ENCODE measurements at regions of chr16 and their contacts with region 1.

Region 1: GRCh38 chr16:21300309-21301167 is 22.4 kb upstream of the CRYM start:
- DNase-seq: peak; percentile 92 to 99
- H3K4me3 ChIP-seq: peak overlapping the region; percentile 72 to 79
- H3K27ac ChIP-seq: peak overlapping the region; percentile 82 to 83
- H3K4me1 ChIP-seq: peaks cover 0 to 4% of the 10 kb centered on the region in 2 donors
- H3K27me3 ChIP-seq: no peaks in the 10 kb centered on the region
- CTCF ChIP-seq: peak; percentile 84 to 88 (median 87)

Region 2: GRCh38 chr16:20806168-20807050 is 494.1 kb before region 1 on chr16 and contains the starts of genes ERI2 and REXO5:
- intact Hi-C with region 1: loop called (anchors 2 kb)
- DNase-seq: peak; percentile 80 to 96
- H3K4me3 ChIP-seq: peak within 1 kb of the TSS; percentile 76 to 92
- H3K27ac ChIP-seq: peak within 1 kb of the TSS; percentile 87 to 92
- H3K4me1 ChIP-seq: peaks cover 0 to 5% of the 10 kb centered on the region in 2 donors
- H3K27me3 ChIP-seq: no peaks in the 10 kb centered on the region
- CTCF ChIP-seq: peak in 1 of 3 experiments; percentile 59
- total RNA-seq, gene ERI2: not detected
- total RNA-seq, gene REXO5: 2.1 TPM

Region 3: GRCh38 chr16:21184834-21185233 is 115.7 kb before region 1 on chr16:
- intact Hi-C with region 1: loop called (anchors 1 kb)
- DNase-seq: no peak
- H3K4me3 ChIP-seq: no peak overlapping the region
- H3K27ac ChIP-seq: no peak overlapping the region
- H3K4me1 ChIP-seq: peaks cover 0 to 9% of the 10 kb centered on the region in 2 donors
- H3K27me3 ChIP-seq: no peaks in the 10 kb centered on the region
- CTCF ChIP-seq: no peak

Region 4: DNA sequence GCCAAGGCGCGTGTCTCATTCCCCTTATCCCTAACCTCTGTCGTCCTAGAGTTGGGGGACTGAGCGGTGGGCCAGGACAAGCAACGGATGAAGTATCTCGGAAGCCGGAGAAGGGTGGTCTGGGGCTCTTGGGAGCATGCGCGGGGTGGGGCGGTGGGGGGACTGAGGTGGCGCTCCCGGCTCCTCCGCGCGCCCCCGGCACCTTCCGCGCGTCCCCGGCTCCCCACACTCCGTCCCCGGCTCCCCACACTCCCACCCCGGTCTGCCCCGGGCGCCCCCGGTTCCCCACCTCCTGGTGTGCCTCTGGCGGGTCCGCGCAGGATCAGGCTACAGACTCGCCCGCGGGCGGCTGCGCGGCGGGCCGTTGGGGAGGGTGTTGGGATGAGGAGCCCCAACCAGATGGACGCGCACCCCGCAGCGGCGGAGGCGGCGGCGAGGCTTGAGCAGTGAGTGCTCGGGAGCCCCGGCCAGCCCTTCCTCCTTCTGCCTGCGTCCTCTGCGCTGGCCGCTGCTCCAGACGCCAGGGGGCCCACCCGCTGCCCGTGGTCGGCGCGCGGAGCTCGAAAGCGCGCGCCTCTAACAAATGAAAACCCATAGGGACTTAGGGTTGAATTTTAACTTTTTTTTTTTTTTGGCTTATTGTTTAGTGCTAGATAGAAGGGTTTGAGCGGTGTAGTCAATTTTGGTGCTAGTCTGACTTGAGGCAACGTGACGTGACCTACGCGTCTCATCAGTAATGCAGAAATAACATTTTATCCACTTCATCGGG is 16.8 kb before region 1 on chr16:
- intact Hi-C with region 1: loop called (anchors 2 kb)
- DNase-seq: no peak
- H3K4me3 ChIP-seq: peak overlapping the region; percentile 53 to 68
- H3K27ac ChIP-seq: peak overlapping the region; percentile 41 to 74
- H3K4me1 ChIP-seq: peaks cover 0 to 4% of the 10 kb centered on the region in 2 donors
- H3K27me3 ChIP-seq: no peaks in the 10 kb centered on the region
- CTCF ChIP-seq: peak; percentile 14 to 63 (median 29)

Measured in ascending aorta (tissue), 2 donors.